Motor neuron (in vitro differentiated cells): ENCODE measurements at regions of chr11 and their contacts with region 1.

Region 1: DNA sequence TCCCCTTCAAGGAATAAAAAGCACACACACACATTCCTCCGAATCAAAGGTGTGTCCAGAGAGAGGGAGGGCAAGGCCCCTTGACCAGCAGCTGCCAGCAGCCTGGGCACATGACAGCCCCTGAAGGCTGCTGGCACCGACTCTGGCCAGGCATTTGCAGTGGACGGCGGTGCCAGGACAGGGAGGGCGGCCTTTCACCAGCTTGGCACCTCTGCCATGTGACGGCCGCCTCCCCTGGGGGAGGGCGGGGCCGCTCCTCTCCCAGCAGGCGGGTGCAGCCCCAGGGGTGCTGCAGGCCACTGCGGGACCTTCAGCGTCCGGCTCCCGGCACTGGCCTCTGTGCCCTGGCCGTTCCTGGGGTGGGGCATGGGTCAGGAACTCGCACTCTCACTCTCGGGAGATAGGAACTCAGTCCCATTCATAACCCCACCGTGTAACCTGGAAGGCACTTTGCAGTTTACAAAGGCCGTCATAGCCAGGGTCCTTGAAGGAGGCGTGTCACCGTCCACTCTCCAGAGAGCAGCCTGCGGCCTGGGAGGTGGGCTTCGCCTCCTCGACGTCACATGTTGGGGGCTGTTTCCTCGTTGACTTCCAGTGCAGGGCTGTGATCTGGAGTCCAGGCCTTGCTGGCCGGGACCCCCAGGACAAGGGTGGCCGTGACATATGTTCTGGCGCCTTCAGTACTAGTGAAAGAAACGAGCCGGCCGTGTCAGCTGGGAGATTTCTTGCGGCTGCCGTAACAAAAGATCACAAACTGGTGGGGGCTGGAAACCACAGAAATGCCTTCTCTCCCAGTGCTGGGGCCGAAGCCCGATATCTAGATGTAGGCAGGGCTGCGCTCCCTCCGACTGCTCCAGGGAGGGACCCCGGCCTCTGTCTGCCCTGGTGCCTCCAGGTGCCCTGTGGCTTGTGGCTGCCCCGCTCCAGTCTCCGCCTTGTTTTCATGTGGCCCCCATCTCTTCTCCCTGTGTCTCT is 39.9 kb upstream of the SMIM38 start:
- ATAC-seq: no peak
- H3K4me3 ChIP-seq: no peak overlapping the region
- H3K27ac ChIP-seq: no peak overlapping the region
- H3K4me1 ChIP-seq: peaks cover 0 to 8% of the 10 kb centered on the region in 2 donors

Region 2: DNA sequence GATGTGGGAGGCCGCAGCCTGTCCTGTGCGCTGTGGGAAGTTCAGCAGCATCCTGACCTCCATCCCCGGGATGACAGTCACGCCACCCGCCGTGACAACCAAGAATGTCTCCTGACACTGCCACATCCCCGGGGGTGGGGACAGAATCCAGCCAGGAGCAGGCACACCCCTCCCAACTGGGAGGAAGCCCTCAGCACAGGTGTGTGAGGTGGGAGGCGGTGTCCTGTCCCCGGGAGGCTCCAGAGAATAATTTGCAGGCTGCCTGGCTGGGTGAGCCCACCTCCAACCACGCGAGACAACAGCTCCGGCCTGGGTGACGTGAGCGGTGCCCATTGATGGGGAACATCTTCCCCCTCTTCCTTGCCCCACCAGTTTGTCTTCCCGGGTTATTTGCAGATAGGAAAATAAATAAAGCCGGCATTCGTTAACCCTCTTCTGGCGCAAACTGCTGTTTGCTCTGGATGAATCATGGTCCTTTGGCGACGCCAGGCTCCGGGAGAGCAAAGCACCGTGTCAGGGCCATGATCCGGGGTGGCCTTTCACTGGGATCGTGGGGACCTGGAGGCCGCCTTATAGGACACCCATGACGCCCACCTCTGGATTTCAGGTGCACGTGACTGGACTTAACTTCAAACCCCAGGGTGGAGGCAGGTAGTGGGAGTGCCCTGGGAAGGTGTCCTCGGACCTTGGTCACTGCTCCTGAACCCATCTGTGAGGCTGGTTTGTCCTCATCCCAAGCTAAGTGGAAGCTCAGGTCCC is 538.9 kb after region 1 on chr11:
- in situ Hi-C with region 1: loop called in 4 of 9 experiments (anchors 10 to 25 kb)
- ATAC-seq: peak in 3 of 8 experiments; percentile 1 to 5 (median 3)
- H3K4me3 ChIP-seq: no peak overlapping the region
- H3K27ac ChIP-seq: no peak overlapping the region
- H3K4me1 ChIP-seq: peaks cover 12 to 26% of the 10 kb centered on the region in 2 donors